Naive thymus-derived CD4-positive, alpha-beta T cell (primary cell): ENCODE measurements at regions of chr6 and their contacts with region 1.

Region 1: DNA sequence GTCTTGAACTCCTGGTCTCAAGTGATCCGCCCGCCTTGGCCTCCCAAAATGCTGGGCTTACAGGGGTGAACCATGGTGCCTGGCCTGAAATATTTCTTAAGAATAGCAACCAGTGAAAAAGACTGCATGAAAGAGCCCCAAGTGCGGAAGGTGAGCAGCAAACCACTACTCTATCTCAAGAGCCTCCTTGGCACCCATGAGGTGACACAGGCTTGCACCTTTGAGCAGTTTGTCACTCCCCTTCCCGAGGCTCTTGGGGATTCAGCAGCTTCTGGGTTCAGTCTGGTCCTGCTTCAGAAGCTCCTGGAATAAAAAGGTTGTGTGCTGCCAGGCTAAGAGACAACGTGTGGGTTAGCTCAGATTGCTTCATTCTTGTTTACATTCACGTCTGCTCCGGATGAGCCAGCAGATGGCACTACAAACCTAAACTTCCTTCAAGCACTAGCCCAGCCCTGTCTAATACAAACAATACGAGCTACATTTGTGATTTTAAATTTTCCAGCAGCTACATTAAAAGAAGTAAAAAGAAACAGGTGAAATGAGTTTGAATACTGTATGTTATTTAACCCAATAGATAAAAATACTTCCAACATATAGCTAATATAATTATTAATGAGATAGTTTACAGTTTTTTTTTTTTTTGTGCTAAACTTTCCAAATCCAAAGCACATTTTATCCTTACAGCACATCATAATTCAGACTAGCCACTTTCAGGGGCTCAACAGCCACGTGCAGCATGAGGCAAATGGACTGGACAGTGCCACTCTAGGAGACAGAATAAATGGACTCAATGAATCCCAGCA is 46.2 kb downstream of the GJA10 start:
- DNase-seq: peak; percentile 22 to 80 (median 70)
- ATAC-seq: peak; percentile 90
- H3K4me3 ChIP-seq: no peak overlapping the region
- H3K4me3 Mint-ChIP-seq: peak overlapping the region in 1 of 10 donors; percentile 48
- H3K27ac ChIP-seq: peak overlapping the region; percentile 53
- H3K27ac Mint-ChIP-seq: peak overlapping the region in 8 of 9 donors; percentile 50 to 91 (median 78)
- H3K4me1 ChIP-seq: peaks cover 0 to 9% of the 10 kb centered on the region in 2 donors
- H3K4me1 Mint-ChIP-seq: peaks cover 6 to 75% (median 39%) of the 10 kb centered on the region in 7 donors
- H3K27me3 ChIP-seq: no peaks in the 10 kb centered on the region
- H3K27me3 Mint-ChIP-seq: no peaks in the 10 kb centered on the region

Region 2: GRCh38 chr6:89853068-89853467 is 87.4 kb before region 1 on chr6:
- CTCF ChIA-PET with region 1: no interaction called
- POLR2A ChIA-PET with region 1: no interaction called
- intact Hi-C with region 1: no loop called
- DNase-seq: no peak
- ATAC-seq: no peak
- H3K4me3 ChIP-seq: no peak overlapping the region
- H3K4me3 Mint-ChIP-seq: no peak overlapping the region
- H3K27ac ChIP-seq: no peak overlapping the region
- H3K27ac Mint-ChIP-seq: peak overlapping the region in 1 of 9 donors; percentile 45
- H3K4me1 ChIP-seq: no peaks in the 10 kb centered on the region
- H3K4me1 Mint-ChIP-seq: peaks cover 0 to 15% (median 5%) of the 10 kb centered on the region in 7 donors
- H3K27me3 ChIP-seq: no peaks in the 10 kb centered on the region
- H3K27me3 Mint-ChIP-seq: no peaks in the 10 kb centered on the region

Region 3: GRCh38 chr6:89887452-89888137 is 52.8 kb before region 1 on chr6:
- CTCF ChIA-PET with region 1: no interaction called
- POLR2A ChIA-PET with region 1: no interaction called
- intact Hi-C with region 1: no loop called
- DNase-seq: peak in 4 of 9 donors; percentile 2 to 29 (median 10)
- ATAC-seq: peak; percentile 37
- H3K4me3 ChIP-seq: no peak overlapping the region
- H3K4me3 Mint-ChIP-seq: peak overlapping the region in 4 of 10 donors; percentile 47 to 65 (median 49)
- H3K27ac ChIP-seq: no peak overlapping the region
- H3K27ac Mint-ChIP-seq: no peak overlapping the region
- H3K4me1 ChIP-seq: no peaks in the 10 kb centered on the region
- H3K4me1 Mint-ChIP-seq: peaks cover 0 to 17% (median 0%) of the 10 kb centered on the region in 7 donors
- H3K27me3 ChIP-seq: peaks cover 0 to 2% of the 10 kb centered on the region in 2 donors
- H3K27me3 Mint-ChIP-seq: peaks cover 17 to 27% (median 22%) of the 10 kb centered on the region in 5 donors

Region 4: GRCh38 chr6:89952686-89953085 is 12.3 kb after region 1 on chr6:
- CTCF ChIA-PET with region 1: interaction called, 10 read pairs
- POLR2A ChIA-PET with region 1: interaction called, 5 read pairs
- intact Hi-C with region 1: loop called in 1 of 2 experiments (anchors 1 kb)
- DNase-seq: peak in 8 of 9 donors; percentile 44 to 88 (median 85)
- ATAC-seq: peak; percentile 97
- H3K4me3 ChIP-seq: peak overlapping the region; percentile 9
- H3K4me3 Mint-ChIP-seq: peak overlapping the region; percentile 44 to 79 (median 69)
- H3K27ac ChIP-seq: peak overlapping the region; percentile 59
- H3K27ac Mint-ChIP-seq: peak overlapping the region; percentile 70 to 96 (median 93)
- H3K4me1 ChIP-seq: peaks cover 40 to 49% of the 10 kb centered on the region in 2 donors
- H3K4me1 Mint-ChIP-seq: peaks cover 40 to 78% (median 73%) of the 10 kb centered on the region in 7 donors
- H3K27me3 ChIP-seq: no peaks in the 10 kb centered on the region
- H3K27me3 Mint-ChIP-seq: no peaks in the 10 kb centered on the region

Region 5: GRCh38 chr6:89961481-89961880 is 21.1 kb after region 1 on chr6:
- CTCF ChIA-PET with region 1: interaction called, 10 read pairs
- POLR2A ChIA-PET with region 1: no interaction called
- intact Hi-C with region 1: loop called in 1 of 2 experiments (anchors 2 kb)
- DNase-seq: no peak
- ATAC-seq: no peak
- H3K4me3 ChIP-seq: no peak overlapping the region
- H3K4me3 Mint-ChIP-seq: no peak overlapping the region
- H3K27ac ChIP-seq: no peak overlapping the region
- H3K27ac Mint-ChIP-seq: peak overlapping the region in 7 of 9 donors; percentile 48 to 89 (median 79)
- H3K4me1 ChIP-seq: peaks cover 0 to under 1% of the 10 kb centered on the region in 2 donors
- H3K4me1 Mint-ChIP-seq: peaks cover 14 to 97% (median 76%) of the 10 kb centered on the region in 7 donors
- H3K27me3 ChIP-seq: no peaks in the 10 kb centered on the region
- H3K27me3 Mint-ChIP-seq: no peaks in the 10 kb centered on the region

Region 6: DNA sequence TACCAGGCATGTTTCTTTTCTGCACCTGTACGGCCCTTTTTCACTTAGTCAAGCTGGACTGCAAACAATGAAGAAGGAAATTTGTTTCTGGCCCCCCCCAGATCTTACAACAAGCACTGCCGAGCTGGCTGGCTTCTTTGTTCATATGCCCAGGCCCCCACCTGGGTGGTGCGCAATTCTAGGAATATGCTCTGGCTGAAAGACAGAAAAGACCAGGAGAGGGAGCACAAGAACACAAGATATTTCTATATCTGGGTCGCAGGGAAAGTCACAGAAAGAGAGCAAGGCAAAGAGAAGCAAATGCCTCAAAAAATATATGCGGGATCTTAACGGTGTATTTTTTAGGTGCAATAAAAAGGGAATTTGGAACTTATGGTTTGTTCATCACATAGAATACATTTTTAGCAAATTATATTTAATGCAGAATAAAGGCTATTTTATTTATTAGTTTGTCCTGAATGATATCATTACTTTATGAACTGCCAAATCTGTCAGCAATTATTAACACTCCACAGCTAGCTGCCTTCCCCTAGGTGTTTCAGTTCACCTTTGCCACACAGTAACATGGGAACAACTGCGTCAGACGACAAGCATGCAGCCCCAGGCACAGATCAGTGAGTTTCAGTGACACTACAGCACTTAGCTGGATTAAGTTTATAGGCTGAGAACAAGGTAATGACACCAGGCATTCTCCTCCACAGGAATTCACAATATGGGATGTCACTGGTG is 30.3 kb after region 1 on chr6:
- CTCF ChIA-PET with region 1: interaction called, 5 read pairs
- POLR2A ChIA-PET with region 1: no interaction called
- intact Hi-C with region 1: loop called in 1 of 2 experiments (anchors 1 kb)
- DNase-seq: peak in 7 of 9 donors; percentile 31 to 54 (median 39)
- ATAC-seq: peak; percentile 72
- H3K4me3 ChIP-seq: no peak overlapping the region
- H3K4me3 Mint-ChIP-seq: no peak overlapping the region
- H3K27ac ChIP-seq: no peak overlapping the region
- H3K27ac Mint-ChIP-seq: no peak overlapping the region
- H3K4me1 ChIP-seq: peaks cover 0 to 15% of the 10 kb centered on the region in 2 donors
- H3K4me1 Mint-ChIP-seq: peaks cover 9 to 53% (median 40%) of the 10 kb centered on the region in 7 donors
- H3K27me3 ChIP-seq: no peaks in the 10 kb centered on the region
- H3K27me3 Mint-ChIP-seq: no peaks in the 10 kb centered on the region

Region 7: GRCh38 chr6:90110971-90111370 is 170.5 kb after region 1 on chr6:
- CTCF ChIA-PET with region 1: interaction called, 9 read pairs
- POLR2A ChIA-PET with region 1: no interaction called
- intact Hi-C with region 1: loop called (anchors 1 to 2 kb)
- DNase-seq: peak in 8 of 9 donors; percentile 51 to 78 (median 64)
- ATAC-seq: peak; percentile 84
- H3K4me3 ChIP-seq: no peak overlapping the region
- H3K4me3 Mint-ChIP-seq: peak overlapping the region; percentile 35 to 81 (median 58)
- H3K27ac ChIP-seq: peak overlapping the region; percentile 56
- H3K27ac Mint-ChIP-seq: peak overlapping the region; percentile 73 to 92 (median 82)
- H3K4me1 ChIP-seq: peaks cover 26 to 57% of the 10 kb centered on the region in 2 donors
- H3K4me1 Mint-ChIP-seq: peaks cover 36 to 97% (median 90%) of the 10 kb centered on the region in 7 donors
- H3K27me3 ChIP-seq: no peaks in the 10 kb centered on the region
- H3K27me3 Mint-ChIP-seq: no peaks in the 10 kb centered on the region

Region 8: DNA sequence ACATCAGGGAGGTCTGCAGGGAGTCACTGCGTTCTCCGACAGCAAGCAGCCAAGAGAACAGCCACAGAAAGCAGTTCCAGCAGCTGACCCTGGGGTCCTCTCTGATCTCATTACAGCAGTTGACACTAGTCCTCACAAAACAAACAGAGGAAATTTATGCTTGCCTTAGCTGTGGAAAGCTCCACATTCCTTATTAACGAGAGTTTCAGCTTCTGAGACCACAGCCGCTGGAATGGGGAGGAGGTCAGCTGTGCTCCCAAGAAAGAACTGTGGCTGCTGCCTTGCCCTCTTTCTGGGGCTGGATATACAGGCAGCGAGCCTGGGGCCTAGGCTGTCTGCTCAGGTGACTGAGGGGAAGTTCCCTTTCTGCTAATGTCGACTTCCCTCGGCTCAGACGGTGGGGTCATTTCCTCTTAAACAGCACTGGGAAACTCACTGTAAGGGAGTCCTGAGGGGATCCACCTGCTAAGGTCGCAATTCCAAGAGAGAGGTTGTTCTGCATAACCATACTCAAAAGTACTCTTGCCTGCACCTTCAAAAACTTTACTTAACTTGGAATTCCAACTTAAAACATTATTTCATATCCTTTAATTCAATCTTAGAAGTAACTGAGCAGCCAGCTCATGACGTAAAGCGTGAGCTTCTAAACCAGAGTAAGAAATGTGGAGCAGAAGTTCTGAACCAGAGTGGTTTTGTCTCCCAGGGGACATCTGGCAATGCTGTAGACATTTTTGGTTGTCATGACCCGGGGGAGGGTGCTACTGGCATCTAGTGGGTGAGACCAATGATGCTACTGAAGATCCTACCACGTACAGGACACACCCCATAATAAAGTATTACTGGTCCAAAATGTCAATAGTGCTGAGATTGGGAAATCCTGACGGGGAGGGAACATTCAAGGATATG is 275.9 kb after region 1 on chr6:
- CTCF ChIA-PET with region 1: interaction called, 6 read pairs
- POLR2A ChIA-PET with region 1: interaction called, 3 read pairs
- intact Hi-C with region 1: loop called in 1 of 2 experiments (anchors 1 kb)
- DNase-seq: peak in 5 of 9 donors; percentile 61 to 82 (median 63)
- ATAC-seq: peak; percentile 69
- H3K4me3 ChIP-seq: peak overlapping the region; percentile 18
- H3K4me3 Mint-ChIP-seq: peak overlapping the region in 7 of 10 donors; percentile 42 to 74 (median 68)
- H3K27ac ChIP-seq: peak overlapping the region; percentile 85
- H3K27ac Mint-ChIP-seq: no peak overlapping the region
- H3K4me1 ChIP-seq: peaks cover 0 to 97% of the 10 kb centered on the region in 2 donors
- H3K4me1 Mint-ChIP-seq: peaks cover 0 to 33% (median 31%) of the 10 kb centered on the region in 7 donors
- H3K27me3 ChIP-seq: no peaks in the 10 kb centered on the region
- H3K27me3 Mint-ChIP-seq: no peaks in the 10 kb centered on the region

Region 9: GRCh38 chr6:90574610-90575009 is 634.2 kb after region 1 on chr6:
- CTCF ChIA-PET with region 1: no interaction called
- POLR2A ChIA-PET with region 1: no interaction called
- intact Hi-C with region 1: loop called in 1 of 2 experiments (anchors 5 kb)
- DNase-seq: no peak
- ATAC-seq: no peak
- H3K4me3 ChIP-seq: no peak overlapping the region
- H3K4me3 Mint-ChIP-seq: no peak overlapping the region
- H3K27ac ChIP-seq: no peak overlapping the region
- H3K27ac Mint-ChIP-seq: peak overlapping the region in 2 of 9 donors; percentile 3 to 34
- H3K4me1 ChIP-seq: no peaks in the 10 kb centered on the region
- H3K4me1 Mint-ChIP-seq: peaks cover 8 to 49% (median 26%) of the 10 kb centered on the region in 7 donors
- H3K27me3 ChIP-seq: no peaks in the 10 kb centered on the region
- H3K27me3 Mint-ChIP-seq: no peaks in the 10 kb centered on the region